OCI-LY7 (cell line): ENCODE measurements at regions of chr9 and their contacts with region 1.

Region 1: GRCh38 chr9:111451570-111451969 is 32.6 kb downstream of the ECPAS start:
- DNase-seq: no peak
- H3K4me3 ChIP-seq: no peak overlapping the region
- H3K27ac ChIP-seq: no peak overlapping the region
- H3K4me1 ChIP-seq: peaks cover 3% of the 10 kb centered on the region
- CTCF ChIP-seq: no peak

Region 2: DNA sequence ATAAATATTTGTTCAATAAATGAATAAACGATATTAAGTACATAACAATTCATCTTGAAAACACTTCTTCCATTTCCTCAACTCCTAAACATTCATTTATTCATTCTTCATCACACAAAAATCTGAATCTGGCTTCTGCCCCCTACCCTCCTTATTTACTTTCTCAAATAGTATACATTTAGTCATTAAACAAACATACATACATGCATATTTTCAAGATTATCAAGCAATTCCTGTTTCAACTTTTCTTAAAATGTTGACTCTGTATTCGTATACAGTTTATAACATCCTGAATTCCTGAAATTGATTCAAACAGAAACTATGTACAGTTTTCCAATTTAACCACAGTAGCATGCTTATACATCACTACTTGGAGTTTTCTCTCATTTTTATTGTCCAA is 654.0 kb before region 1 on chr9:
- CTCF ChIA-PET with region 1: no interaction called
- POLR2A ChIA-PET with region 1: no interaction called
- intact Hi-C with region 1: no loop called
- DNase-seq: no peak
- H3K4me3 ChIP-seq: no peak overlapping the region
- H3K27ac ChIP-seq: no peak overlapping the region
- H3K4me1 ChIP-seq: no peaks in the 10 kb centered on the region
- CTCF ChIP-seq: no peak

Region 3: DNA sequence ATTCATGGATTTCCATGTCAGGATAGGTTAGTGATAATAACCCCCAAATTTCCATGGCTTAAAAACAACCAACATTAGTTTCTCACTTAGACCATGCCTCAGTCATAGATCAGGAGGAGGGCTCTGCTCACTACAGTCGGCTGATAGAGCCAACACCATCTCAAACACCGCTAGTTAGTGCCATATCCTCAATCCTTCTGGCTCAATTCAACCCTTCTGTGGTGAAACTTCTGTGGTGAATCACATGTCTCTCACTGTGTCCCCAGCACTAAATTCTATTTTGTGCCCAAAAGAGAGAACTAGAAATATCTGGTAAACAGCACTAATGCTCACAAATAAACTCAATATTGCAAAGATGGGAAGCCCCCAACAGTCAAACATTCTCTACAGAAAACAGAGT is 11.5 kb after region 1 on chr9:
- CTCF ChIA-PET with region 1: no interaction called
- POLR2A ChIA-PET with region 1: interaction called, 14 read pairs
- intact Hi-C with region 1: no loop called
- DNase-seq: no peak
- H3K4me3 ChIP-seq: no peak overlapping the region
- H3K27ac ChIP-seq: no peak overlapping the region
- H3K4me1 ChIP-seq: no peaks in the 10 kb centered on the region
- CTCF ChIP-seq: no peak